H1 (cell line): ENCODE measurements at regions of chr9 and their contacts with region 1.

Region 1: DNA sequence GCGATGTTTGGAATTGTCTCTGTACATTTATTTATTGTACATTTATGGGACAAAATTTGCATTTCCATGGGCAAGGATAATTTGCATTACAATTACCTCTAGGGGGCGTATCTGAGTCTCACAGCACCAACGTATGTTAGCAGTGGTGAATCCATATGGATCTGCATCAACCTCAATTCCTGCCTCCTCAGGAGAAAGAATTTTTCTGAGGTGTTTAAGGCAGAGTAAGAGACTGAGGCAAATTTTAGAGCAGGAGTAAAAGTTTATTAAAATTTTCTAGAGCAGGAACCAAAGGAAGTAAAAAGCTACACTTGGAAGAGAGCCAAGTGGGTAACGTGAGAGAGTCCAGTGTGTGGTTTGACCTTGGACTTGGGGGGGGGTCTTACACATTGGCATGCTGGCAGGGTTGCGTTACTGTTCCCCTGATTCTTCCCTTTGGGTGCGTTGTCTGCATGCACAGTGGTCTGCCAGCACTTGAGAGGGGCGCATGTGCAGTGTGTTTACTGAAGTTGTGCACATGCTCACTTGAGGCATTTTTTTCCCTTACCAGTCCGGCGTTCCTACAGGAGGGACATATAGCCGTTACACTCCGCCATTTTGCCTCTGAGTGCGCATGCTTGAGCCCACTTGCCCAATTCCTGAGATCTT is 21.0 kb upstream of the RAB14 start:
- DNase-seq: no peak
- H3K4me3 ChIP-seq: no peak overlapping the region
- H3K27ac ChIP-seq: no peak overlapping the region
- H3K4me1 ChIP-seq: peaks cover 12 to 24% (median 19%) of the 10 kb centered on the region in 4 experiments
- H3K27me3 ChIP-seq: peaks cover 0 to 2% (median 0%) of the 10 kb centered on the region in 4 experiments; a peak in 2 of 7 replicates
- CTCF ChIP-seq: peak in 1 of 3 experiments; percentile 58; a peak in 1 of 4 replicates
- EP300 ChIP-seq: no peak
- POLR2A ChIP-seq: no peak
- RAD21 ChIP-seq: peak; percentile 30 to 34; a peak in 3 of 4 replicates

Region 2: DNA sequence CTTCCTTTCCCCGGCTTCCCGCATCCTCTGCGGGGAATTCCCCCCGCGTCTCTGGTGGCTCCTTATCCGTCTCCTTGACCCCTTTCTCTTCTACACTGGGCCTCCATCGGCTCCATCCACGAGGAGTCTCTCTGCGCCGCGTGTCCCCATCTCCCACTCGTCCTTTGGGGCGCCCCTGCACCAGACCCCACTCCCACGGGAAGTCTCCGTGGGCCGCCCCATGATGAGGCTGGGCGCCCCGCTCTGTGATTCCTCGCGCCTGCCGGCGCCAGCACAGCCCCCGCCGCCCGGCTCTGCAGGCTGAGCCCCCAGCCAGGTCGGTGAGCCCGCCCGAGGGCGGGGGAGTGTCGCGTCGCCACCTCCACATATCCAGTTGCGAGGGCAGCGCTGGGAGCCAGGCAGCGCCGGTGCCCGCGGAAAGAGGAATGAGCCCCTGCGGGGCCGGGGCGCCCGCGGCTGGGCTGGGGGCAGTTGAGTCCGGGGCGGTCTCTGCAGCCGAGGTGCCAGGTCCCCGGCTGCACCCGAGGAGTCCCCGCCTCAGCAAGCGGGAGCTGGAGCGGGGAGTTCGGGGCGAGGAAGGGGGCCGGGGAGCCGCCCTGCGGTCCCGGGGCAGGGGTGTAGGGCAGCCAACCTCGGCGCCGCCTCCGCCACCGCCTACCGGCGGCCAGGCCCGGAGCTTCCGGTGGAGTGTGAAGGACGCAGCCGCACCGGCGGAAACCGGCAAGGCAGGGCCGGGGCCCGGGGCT is 294.0 kb before region 1 on chr9:
- CTCF ChIA-PET with region 1: no interaction called
- POLR2A ChIA-PET with region 1: no interaction called
- DNase-seq: peak in 1 of 2 experiments; percentile 85
- H3K4me3 ChIP-seq: peak overlapping the region; percentile 51 to 81 (median 64)
- H3K27ac ChIP-seq: peak overlapping the region; percentile 42; the same call in 1 of the 2 replicates
- H3K4me1 ChIP-seq: peaks cover 0 to 23% (median 13%) of the 10 kb centered on the region in 4 experiments; a peak in 6 of 7 replicates
- H3K27me3 ChIP-seq: peaks cover 0 to 6% (median 2%) of the 10 kb centered on the region in 4 experiments; a peak in 1 of 7 replicates
- CTCF ChIP-seq: no peak
- EP300 ChIP-seq: no peak
- POLR2A ChIP-seq: no peak
- RAD21 ChIP-seq: no peak; a peak in 1 of 4 replicates

Region 3: GRCh38 chr9:121233906-121234901 is 11.6 kb after region 1 on chr9:
- CTCF ChIA-PET with region 1: interaction called, 17 read pairs
- POLR2A ChIA-PET with region 1: interaction called, 3 read pairs
- DNase-seq: no peak
- H3K4me3 ChIP-seq: no peak overlapping the region
- H3K27ac ChIP-seq: no peak overlapping the region
- H3K4me1 ChIP-seq: peaks cover 0 to 3% (median 0%) of the 10 kb centered on the region in 4 experiments; a peak in 1 of 7 replicates
- H3K27me3 ChIP-seq: peaks cover 0 to 2% (median 0%) of the 10 kb centered on the region in 4 experiments; a peak in 3 of 7 replicates
- CTCF ChIP-seq: no peak
- EP300 ChIP-seq: no peak
- POLR2A ChIP-seq: no peak
- RAD21 ChIP-seq: no peak

Region 4: GRCh38 chr9:121267689-121268597 is 45.3 kb after region 1 on chr9 and contains the start of gene GSN:
- CTCF ChIA-PET with region 1: interaction called, 10 read pairs
- POLR2A ChIA-PET with region 1: interaction called, 5 read pairs
- DNase-seq: peak in 1 of 2 experiments; percentile 86
- H3K4me3 ChIP-seq: peak within 1 kb of the TSS; percentile 63 to 94 (median 72)
- H3K27ac ChIP-seq: no peak within 1 kb of the TSS
- H3K4me1 ChIP-seq: peaks cover 4 to 31% (median 12%) of the 10 kb centered on the region in 4 experiments
- H3K27me3 ChIP-seq: peaks cover 0 to 30% (median 22%) of the 10 kb centered on the region in 4 experiments; a peak in 6 of 7 replicates
- CTCF ChIP-seq: peak in 2 of 3 experiments; percentile 0 to 32; a peak in 2 of 4 replicates
- EP300 ChIP-seq: no peak
- POLR2A ChIP-seq: 0 out of 3 replicates have a peak, but pooled peaks of 1 of the 2 experiments have one; percentile 8
- RAD21 ChIP-seq: peak in 1 of 2 experiments; percentile 7; a peak in 2 of 4 replicates
- total RNA-seq, gene GSN: 49.7 and 52.3 TPM in 2 replicates